Dendritic cell treated with granulocyte-macrophage colony-stimulating factor and Interleukin-4, amounts not matched to agents 40 ng/mL and 50 ng/mL, for 4 days (primary cell): ENCODE measurements at regions of chr15 and their contacts with region 1.

Region 1: GRCh38 chr15:22872936-22873701 is 34.7 kb downstream of the NIPA2 start:
- H3K4me3 Mint-ChIP-seq: no peak overlapping the region
- H3K27ac Mint-ChIP-seq: no peak overlapping the region
- H3K4me1 Mint-ChIP-seq: no peaks in the 10 kb centered on the region
- H3K27me3 Mint-ChIP-seq: no peaks in the 10 kb centered on the region

Region 2: DNA sequence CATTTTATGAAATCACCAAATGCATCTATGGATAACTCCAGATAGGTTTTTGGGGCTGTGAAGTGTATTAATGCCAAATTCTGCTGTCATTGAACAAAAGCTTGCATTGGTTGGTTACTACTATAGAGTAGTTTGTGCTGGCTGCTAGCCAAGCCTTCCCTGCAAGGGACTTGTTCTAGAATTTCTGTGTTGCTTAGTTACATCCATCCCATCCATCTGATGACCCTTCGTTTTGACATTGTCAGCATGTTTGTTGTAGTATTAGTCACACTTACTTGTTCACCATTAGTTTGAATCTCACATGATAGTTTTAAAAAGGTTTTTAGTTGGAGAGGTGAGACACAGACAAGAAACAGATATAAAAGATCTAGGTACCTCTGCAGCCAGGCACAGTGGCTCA is 41.6 kb before region 1 on chr15:
- intact Hi-C with region 1: no loop called
- H3K4me3 Mint-ChIP-seq: no peak overlapping the region
- H3K27ac Mint-ChIP-seq: no peak overlapping the region
- H3K4me1 Mint-ChIP-seq: no peaks in the 10 kb centered on the region
- H3K27me3 Mint-ChIP-seq: no peaks in the 10 kb centered on the region

Region 3: GRCh38 chr15:23026218-23026617 is 153.1 kb after region 1 on chr15:
- intact Hi-C with region 1: loop called (anchors 10 kb)
- H3K4me3 Mint-ChIP-seq: no peak overlapping the region
- H3K27ac Mint-ChIP-seq: no peak overlapping the region
- H3K4me1 Mint-ChIP-seq: no peaks in the 10 kb centered on the region
- H3K27me3 Mint-ChIP-seq: no peaks in the 10 kb centered on the region

Region 4: DNA sequence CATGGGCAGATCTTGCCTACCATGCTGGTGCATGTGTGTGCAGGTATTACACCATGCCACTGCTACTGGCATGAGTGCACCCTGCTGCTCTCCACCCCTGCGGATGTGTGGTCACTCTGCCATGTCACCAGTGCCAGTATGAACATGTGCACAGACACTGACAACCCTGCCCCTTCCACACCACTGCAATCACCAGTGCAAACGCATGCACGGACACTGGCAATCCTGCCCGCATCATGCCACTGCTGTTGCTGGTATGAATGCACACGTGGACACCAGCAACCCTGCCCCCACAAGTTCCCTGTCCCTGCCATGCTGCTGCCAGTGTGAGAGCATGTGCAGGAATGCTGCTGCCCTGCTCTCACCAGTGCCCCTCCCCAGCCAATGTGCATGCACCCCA is 191.0 kb after region 1 on chr15:
- intact Hi-C with region 1: no loop called
- H3K4me3 Mint-ChIP-seq: no peak overlapping the region
- H3K27ac Mint-ChIP-seq: no peak overlapping the region
- H3K4me1 Mint-ChIP-seq: no peaks in the 10 kb centered on the region
- H3K27me3 Mint-ChIP-seq: peaks cover 4% of the 10 kb centered on the region